ENCODE measurements at regions of chr10 and their contacts with region 1.

Region 1: GRCh38 chr10:11424456-11425297 is 186.8 kb downstream of the USP6NL start:
- DNase-seq: peak; percentile 51
- ATAC-seq: peak; percentile 78
- H3K4me3 ChIP-seq: no peak overlapping the region
- H3K27ac ChIP-seq: no peak overlapping the region
- H3K4me1 ChIP-seq: no peaks in the 10 kb centered on the region
- H3K27me3 ChIP-seq: no peaks in the 10 kb centered on the region
- CTCF ChIP-seq: peak; percentile 69

Region 2: GRCh38 chr10:11225935-11226334 is 198.7 kb before region 1 on chr10:
- CTCF ChIA-PET with region 1: no interaction called
- POLR2A ChIA-PET with region 1: no interaction called
- intact Hi-C with region 1: no loop called
- DNase-seq: no peak
- ATAC-seq: no peak
- H3K4me3 ChIP-seq: no peak overlapping the region
- H3K27ac ChIP-seq: no peak overlapping the region
- H3K4me1 ChIP-seq: no peaks in the 10 kb centered on the region
- H3K27me3 ChIP-seq: peaks cover 20% of the 10 kb centered on the region; the same call in 1 of the 2 replicates
- CTCF ChIP-seq: no peak

Region 3: GRCh38 chr10:11472158-11472753 is 47.6 kb after region 1 on chr10:
- CTCF ChIA-PET with region 1: no interaction called
- POLR2A ChIA-PET with region 1: no interaction called
- intact Hi-C with region 1: loop called (anchors 2 kb)
- DNase-seq: peak; percentile 59
- ATAC-seq: peak; percentile 66
- H3K4me3 ChIP-seq: no peak overlapping the region
- H3K27ac ChIP-seq: no peak overlapping the region
- H3K4me1 ChIP-seq: peaks cover 5% of the 10 kb centered on the region; the same call in 1 of the 2 replicates
- H3K27me3 ChIP-seq: no peaks in the 10 kb centered on the region
- CTCF ChIP-seq: peak; percentile 69

Region 4: DNA sequence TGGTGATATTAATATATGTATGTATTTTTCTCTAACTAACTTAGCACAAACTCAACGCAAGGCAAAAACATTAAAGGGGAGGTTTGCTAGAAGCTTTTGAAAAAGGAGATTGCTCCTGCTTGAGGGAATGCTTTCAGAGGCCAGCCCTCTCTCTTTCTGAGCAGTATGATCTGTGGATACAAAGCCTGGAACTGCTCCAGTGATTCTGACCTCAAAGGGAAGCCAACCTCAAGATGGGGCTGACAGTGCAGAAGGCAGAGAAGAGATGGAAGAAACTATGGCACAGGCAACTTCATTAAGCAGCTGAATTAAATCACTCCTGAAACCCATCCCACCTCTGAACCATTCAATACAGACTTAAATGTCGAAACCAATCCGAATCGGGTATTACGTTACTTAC is 84.4 kb after region 1 on chr10:
- CTCF ChIA-PET with region 1: no interaction called
- POLR2A ChIA-PET with region 1: interaction called, 10 read pairs
- intact Hi-C with region 1: no loop called
- DNase-seq: no peak
- ATAC-seq: no peak
- H3K4me3 ChIP-seq: no peak overlapping the region
- H3K27ac ChIP-seq: no peak overlapping the region
- H3K4me1 ChIP-seq: no peaks in the 10 kb centered on the region
- H3K27me3 ChIP-seq: no peaks in the 10 kb centered on the region
- CTCF ChIP-seq: no peak

Measured in PC-3 (cell line).